ENCODE measurements at regions of chr5 and their contacts with region 1.

Region 1: DNA sequence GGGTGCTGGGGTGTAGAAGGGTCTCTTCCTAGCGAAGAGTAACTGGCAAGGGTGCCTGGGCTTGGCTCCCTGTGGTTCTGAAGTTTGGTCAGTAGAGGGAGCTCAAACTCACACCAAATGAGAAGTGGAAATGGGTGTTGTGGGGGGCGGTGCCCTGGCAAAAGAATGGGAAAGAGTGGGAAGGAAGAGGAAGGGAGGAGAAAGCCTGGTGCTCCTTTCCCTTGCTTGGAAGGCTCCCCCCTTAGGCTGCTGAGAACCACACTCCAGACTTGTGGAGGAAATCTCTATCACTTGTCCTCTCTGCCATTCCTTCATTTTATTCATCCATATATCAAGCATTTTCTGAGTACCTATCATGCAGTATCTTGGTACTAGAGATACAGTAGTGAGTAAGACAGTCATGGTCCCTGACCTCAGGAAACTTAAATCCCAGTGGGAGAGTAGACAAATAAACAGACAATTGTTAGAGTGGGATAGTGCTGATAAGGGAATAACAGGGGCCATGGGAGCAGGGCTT is 13.0 kb downstream of the SLC4A9 start:
- DNase-seq: no peak
- ATAC-seq: peak; percentile 70
- H3K4me3 Mint-ChIP-seq: no peak overlapping the region
- H3K27ac Mint-ChIP-seq: peak overlapping the region; percentile 18
- H3K4me1 Mint-ChIP-seq: peaks cover 7% of the 10 kb centered on the region
- H3K27me3 Mint-ChIP-seq: no peaks in the 10 kb centered on the region
- CTCF ChIP-seq: peak; percentile 80

Region 2: GRCh38 chr5:140351609-140352334 is 21.3 kb before region 1 on chr5:
- CTCF ChIA-PET with region 1: interaction called, 11 read pairs
- POLR2A ChIA-PET with region 1: no interaction called
- intact Hi-C with region 1: no loop called
- DNase-seq: no peak
- ATAC-seq: peak; percentile 74
- H3K4me3 Mint-ChIP-seq: no peak overlapping the region
- H3K27ac Mint-ChIP-seq: no peak overlapping the region
- H3K4me1 Mint-ChIP-seq: peaks cover 21% of the 10 kb centered on the region
- H3K27me3 Mint-ChIP-seq: peaks cover 5% of the 10 kb centered on the region
- CTCF ChIP-seq: peak; percentile 62

Region 3: GRCh38 chr5:140547508-140548299 is 174.7 kb after region 1 on chr5 and contains the start of gene EIF4EBP3:
- CTCF ChIA-PET with region 1: no interaction called
- POLR2A ChIA-PET with region 1: no interaction called
- intact Hi-C with region 1: no loop called
- DNase-seq: peak; percentile 74
- ATAC-seq: peak; percentile 97
- H3K4me3 Mint-ChIP-seq: peak within 1 kb of the TSS; percentile 86
- H3K27ac Mint-ChIP-seq: peak within 1 kb of the TSS; percentile 95
- H3K4me1 Mint-ChIP-seq: peaks cover 28% of the 10 kb centered on the region
- H3K27me3 Mint-ChIP-seq: no peaks in the 10 kb centered on the region
- CTCF ChIP-seq: no peak
- total RNA-seq, gene EIF4EBP3: 14.4 and 18.2 TPM in 2 replicates

Region 4: DNA sequence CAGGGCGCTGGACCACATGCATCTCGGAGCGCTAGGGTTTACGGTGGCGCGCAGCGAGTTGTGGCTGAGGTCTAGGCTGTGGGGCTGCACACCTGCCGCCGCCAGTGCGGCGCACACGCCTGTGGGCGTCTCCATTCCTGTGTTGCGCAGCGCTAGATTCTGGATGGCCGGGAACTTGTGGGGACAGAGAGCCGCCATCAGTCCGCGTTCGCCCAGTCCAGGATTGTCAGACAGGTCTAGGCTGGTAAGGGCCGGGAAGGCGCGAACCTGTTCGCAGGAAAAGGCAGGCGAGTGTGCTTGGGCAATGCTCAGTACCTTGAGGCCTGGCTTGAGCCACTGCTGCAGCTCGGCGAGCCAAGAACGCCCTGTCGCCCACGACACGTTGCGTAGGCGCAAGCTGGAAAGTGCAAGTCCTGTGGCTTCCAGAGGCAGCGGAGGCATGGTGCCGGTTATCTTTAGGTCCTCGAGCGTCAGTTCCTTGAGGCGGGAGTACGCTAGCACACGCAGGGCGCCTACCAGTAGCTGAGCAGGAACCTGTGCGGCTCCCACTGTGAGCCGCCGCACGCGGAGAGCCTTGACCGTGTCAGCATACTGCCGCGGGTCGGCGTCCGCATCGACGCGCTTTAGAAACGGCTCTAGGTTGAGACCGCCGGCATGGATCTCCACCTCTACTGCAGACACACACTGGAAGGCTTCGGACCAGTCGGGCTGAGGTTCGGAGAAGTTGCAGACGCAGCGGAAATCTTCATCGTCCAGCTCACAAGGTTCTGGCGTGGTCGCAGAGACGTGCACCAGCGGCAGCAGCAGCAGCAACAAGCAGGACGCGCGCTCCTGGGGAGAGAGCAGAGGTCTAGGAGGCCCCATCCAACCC is 259.4 kb after region 1 on chr5:
- CTCF ChIA-PET with region 1: interaction called, 11 read pairs
- POLR2A ChIA-PET with region 1: no interaction called
- intact Hi-C with region 1: loop called (anchors 1 kb)
- DNase-seq: peak; percentile 43
- ATAC-seq: peak; percentile 77
- H3K4me3 Mint-ChIP-seq: peak overlapping the region; percentile 87
- H3K27ac Mint-ChIP-seq: no peak overlapping the region
- H3K4me1 Mint-ChIP-seq: peaks cover 33% of the 10 kb centered on the region
- H3K27me3 Mint-ChIP-seq: peaks cover 18% of the 10 kb centered on the region
- CTCF ChIP-seq: no peak

Region 5: DNA sequence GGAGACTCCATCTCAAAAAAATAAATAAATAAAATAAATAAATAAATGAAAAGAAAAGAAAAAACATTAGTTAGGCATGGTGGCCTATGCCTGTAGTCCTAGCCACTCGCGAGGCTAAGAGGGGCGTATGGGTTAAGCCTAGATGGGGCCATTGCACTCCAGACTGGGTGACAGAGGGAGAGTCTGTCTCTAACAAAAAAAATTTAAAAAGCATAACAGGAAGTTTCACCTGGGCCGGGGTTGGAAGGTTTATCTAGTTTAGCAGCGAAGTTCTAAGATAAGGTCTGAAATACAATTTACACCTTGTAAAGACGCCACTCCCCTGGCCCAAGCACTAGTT is 345.2 kb after region 1 on chr5:
- CTCF ChIA-PET with region 1: interaction called, 45 read pairs
- POLR2A ChIA-PET with region 1: no interaction called
- intact Hi-C with region 1: loop called (anchors 1 kb)
- DNase-seq: no peak
- ATAC-seq: no peak
- H3K4me3 Mint-ChIP-seq: no peak overlapping the region
- H3K27ac Mint-ChIP-seq: no peak overlapping the region
- H3K4me1 Mint-ChIP-seq: no peaks in the 10 kb centered on the region
- H3K27me3 Mint-ChIP-seq: peaks cover 11% of the 10 kb centered on the region
- CTCF ChIP-seq: no peak

Measured in activated B cell treated with CpG ODN at 0.5 μM for 24 hours (primary cell).